ENCODE measurements at regions of chr10 and their contacts with region 1.

Region 1: GRCh38 chr10:51667678-51668335 is 31.6 kb downstream of the CSTF2T start:
- DNase-seq: no peak
- H3K4me3 ChIP-seq: no peak overlapping the region
- H3K27ac ChIP-seq: no peak overlapping the region
- H3K4me1 ChIP-seq: peaks cover 0 to 6% (median 0%) of the 10 kb centered on the region in 6 donors
- H3K27me3 ChIP-seq: no peaks in the 10 kb centered on the region
- CTCF ChIP-seq: no peak
- POLR2A ChIP-seq: no peak

Region 2: GRCh38 chr10:51729822-51730555 is 62.2 kb after region 1 on chr10:
- intact Hi-C with region 1: loop called (anchors 10 kb)
- DNase-seq: no peak
- H3K4me3 ChIP-seq: no peak overlapping the region
- H3K27ac ChIP-seq: no peak overlapping the region
- H3K4me1 ChIP-seq: no peaks in the 10 kb centered on the region
- H3K27me3 ChIP-seq: no peaks in the 10 kb centered on the region
- CTCF ChIP-seq: no peak
- POLR2A ChIP-seq: no peak

Measured in spleen (tissue), 13 donors.